ENCODE measurements at regions of chr1 and their contacts with region 1.

Region 1: DNA sequence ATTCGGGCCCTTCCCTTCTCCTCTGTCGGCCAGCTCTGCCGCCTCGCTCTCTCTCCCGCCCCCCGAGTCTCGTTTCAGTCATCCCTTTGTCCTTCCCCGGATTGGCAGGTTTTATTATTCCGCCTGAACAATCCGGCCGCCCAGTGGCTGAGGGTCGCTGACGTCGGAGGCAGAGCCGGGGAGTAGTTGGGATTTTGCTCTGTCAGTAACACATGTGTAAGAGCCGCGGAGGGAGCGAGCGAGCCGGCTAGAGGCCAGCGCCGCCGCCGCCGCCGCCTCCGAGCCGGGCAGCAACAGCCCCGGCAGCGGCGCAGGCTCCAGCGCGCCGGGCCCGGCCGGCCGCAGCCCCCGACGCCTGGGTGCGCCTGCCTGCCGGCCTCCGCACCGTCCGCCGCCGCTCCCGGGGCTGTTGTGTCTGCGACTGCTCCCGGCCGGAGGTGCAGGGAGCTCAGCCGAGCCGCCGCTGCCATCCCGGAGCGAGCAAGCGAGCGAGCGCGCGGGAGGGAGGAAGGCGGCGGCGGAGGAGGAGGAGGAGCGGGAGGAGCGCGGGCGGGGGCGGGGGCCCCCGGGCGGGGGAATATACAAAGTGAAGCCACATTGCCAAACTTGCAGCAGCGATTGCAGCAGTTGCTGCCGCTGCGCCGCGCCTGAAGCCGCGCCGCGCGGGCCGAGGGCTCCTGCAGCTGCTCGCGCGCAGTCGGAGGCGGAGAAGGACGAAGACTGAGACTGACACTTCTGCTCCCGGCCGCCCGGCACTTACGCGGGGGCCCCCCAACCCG is at the start of gene LMO4:
- DNase-seq: peak; percentile 95
- H3K4me3 ChIP-seq: peak within 1 kb of the TSS; percentile 85
- H3K27ac ChIP-seq: peak within 1 kb of the TSS; percentile 98
- H3K27me3 ChIP-seq: no peaks in the 10 kb centered on the region
- CTCF ChIP-seq: no peak
- polyA plus RNA-seq, gene LMO4: 115 and 138 TPM in 2 replicates

Region 2: GRCh38 chr1:87292684-87293493 is 35.6 kb before region 1 on chr1:
- CTCF ChIA-PET with region 1: interaction called, 40 read pairs
- POLR2A ChIA-PET with region 1: no interaction called
- DNase-seq: peak; percentile 27
- H3K4me3 ChIP-seq: no peak overlapping the region
- H3K27ac ChIP-seq: no peak overlapping the region
- H3K27me3 ChIP-seq: peaks cover 2% of the 10 kb centered on the region
- CTCF ChIP-seq: peak; percentile 76

Region 3: GRCh38 chr1:87318056-87318650 is 10.3 kb before region 1 on chr1:
- CTCF ChIA-PET with region 1: interaction called, 27 read pairs
- POLR2A ChIA-PET with region 1: interaction called, 3 read pairs
- DNase-seq: no peak
- H3K4me3 ChIP-seq: no peak overlapping the region
- H3K27ac ChIP-seq: no peak overlapping the region
- H3K27me3 ChIP-seq: peaks cover 8% of the 10 kb centered on the region
- CTCF ChIP-seq: no peak

Region 4: DNA sequence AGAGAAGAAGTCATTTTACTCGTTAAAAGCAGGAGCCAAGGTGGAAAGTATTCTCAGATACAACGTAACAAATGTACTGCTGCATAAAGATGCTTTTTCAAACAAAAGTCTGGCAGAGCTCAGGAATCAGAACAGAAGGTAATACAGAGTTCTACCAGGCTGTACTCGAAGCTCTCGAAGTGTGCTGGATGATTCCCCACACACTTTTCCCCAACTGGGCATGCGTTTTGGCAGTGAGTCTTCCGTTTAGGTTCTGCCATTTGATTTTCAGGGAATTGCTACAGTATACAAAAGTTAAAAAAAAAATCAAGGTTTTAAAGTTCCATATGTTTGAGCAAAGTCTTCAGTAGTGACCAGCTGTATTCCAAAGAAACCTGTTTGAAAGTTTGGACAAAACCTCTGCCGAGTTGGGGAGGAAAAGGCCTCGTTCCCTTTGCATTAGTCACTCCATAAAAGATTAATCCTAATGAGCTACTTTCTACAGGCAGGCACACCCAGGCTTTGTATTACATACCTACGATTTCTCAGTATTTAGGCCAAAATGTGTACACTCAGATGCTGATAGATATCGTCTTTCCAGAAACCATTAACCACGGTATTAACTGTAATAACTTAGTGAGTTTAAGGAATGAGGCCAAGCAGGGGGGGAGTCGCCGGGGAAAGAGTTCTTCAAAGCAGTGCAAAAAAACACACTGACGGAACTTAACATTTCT is 477.4 kb after region 1 on chr1:
- CTCF ChIA-PET with region 1: no interaction called
- POLR2A ChIA-PET with region 1: interaction called, 11 read pairs
- DNase-seq: peak; percentile 50
- H3K4me3 ChIP-seq: peak overlapping the region; percentile 25
- H3K27ac ChIP-seq: peak overlapping the region; percentile 86
- H3K27me3 ChIP-seq: no peaks in the 10 kb centered on the region
- CTCF ChIP-seq: no peak

Region 5: DNA sequence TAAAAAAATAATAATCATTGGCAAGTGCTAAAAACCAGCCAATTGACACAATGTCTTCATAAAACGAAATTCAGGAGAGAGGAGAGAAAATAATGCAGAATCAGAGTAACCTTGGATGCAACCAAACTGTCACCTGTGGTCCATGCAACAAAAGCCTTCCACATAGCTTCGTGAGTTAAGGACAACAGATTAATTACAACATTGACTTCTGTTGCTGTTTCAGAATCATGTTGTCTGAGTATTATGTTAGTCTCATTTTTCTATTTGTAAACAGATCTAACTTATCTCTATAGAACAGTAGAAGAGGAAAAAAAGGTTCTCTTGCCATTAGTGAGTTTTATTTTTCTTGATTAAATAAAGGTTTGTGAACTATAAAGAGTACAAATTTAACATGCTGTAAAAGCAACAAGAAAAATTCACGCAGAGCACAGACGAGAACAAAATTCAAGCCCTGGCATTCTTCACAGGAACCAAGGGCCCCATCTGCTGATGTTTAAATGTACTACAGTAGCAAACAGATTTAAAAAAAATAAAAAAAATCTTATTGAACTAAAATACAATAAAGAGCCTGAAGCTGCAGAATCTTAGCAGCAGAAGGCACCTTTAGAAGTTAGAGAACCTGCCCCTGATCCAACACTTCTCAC is 974.5 kb after region 1 on chr1:
- CTCF ChIA-PET with region 1: interaction called, 15 read pairs
- POLR2A ChIA-PET with region 1: no interaction called
- DNase-seq: peak; percentile 24
- H3K4me3 ChIP-seq: no peak overlapping the region
- H3K27ac ChIP-seq: no peak overlapping the region
- H3K27me3 ChIP-seq: no peaks in the 10 kb centered on the region
- CTCF ChIP-seq: peak; percentile 66